Heart right ventricle (tissue), 16 donors: ENCODE measurements at regions of chr5 and their contacts with region 1.

Region 1: DNA sequence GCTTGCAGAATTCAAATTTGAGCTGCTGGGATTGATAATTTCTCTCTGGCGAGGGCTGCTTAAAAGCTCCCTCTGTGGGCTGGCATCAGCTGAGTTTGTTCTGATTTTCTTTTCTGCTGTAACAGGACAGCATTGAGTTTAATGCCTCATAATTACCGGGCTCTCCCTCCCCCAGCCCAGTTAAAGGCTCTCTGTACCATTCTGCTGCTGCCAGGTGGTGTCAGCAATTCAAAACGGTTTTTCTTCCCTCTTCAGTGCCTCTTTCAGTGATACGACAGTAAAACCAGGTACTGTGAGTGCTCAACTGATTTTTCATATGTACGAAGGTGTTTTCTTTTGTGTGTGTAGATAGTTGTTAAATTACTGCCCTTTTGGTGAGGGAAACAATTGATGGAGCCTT is 509.3 kb upstream of the CTNND2 start:
- DNase-seq: no peak
- ATAC-seq: no peak
- H3K4me3 ChIP-seq: no peak overlapping the region
- H3K27ac ChIP-seq: no peak overlapping the region
- H3K4me1 ChIP-seq: no peaks in the 10 kb centered on the region
- H3K27me3 ChIP-seq: no peaks in the 10 kb centered on the region
- CTCF ChIP-seq: no peak

Region 2: DNA sequence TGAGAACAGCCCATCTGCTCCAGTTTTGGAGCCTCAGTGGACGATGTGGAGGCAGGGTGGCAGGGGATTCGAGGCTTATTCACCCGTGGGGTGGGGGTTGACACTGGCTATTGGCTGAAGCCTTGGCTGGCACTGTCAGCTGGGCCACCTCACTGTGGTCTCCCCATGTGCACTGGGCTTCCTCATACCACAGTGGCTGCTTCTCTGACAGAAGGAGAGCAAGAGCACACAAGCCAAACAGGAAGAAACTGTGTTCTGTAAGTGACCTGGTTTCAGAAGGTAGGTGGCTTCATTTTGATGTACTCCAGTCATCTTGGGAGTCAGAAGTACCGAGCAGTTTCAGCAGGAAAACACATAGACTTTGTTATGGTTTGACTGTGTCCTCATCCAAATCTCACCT is 484.7 kb before region 1 on chr5:
- intact Hi-C with region 1: no loop called
- DNase-seq: no peak
- ATAC-seq: no peak
- H3K4me3 ChIP-seq: no peak overlapping the region
- H3K27ac ChIP-seq: no peak overlapping the region
- H3K4me1 ChIP-seq: no peaks in the 10 kb centered on the region
- H3K27me3 ChIP-seq: no peaks in the 10 kb centered on the region
- CTCF ChIP-seq: no peak

Region 3: DNA sequence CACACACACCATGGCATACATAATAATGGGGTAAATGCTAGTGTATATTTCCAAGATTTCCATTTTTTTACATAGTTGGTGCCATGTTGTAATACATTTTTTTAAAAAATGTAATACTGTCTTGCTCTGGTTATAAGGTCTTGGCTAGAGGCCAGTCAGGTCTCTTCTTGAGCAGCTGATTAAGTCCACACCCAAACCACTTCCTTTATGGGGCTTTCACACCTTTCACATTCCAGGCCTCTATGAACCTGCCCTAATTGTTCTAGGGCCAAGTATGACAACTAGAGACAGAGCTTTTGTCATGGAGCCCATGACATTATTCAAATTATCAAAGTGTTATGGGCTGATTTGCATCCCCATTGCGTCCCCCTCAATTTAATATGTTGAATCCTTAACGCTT is 13.7 kb before region 1 on chr5:
- intact Hi-C with region 1: loop called in 1 of 10 experiments (anchors 1 kb)
- DNase-seq: no peak
- ATAC-seq: no peak
- H3K4me3 ChIP-seq: no peak overlapping the region
- H3K27ac ChIP-seq: no peak overlapping the region
- H3K4me1 ChIP-seq: no peaks in the 10 kb centered on the region
- H3K27me3 ChIP-seq: no peaks in the 10 kb centered on the region
- CTCF ChIP-seq: no peak